HEK293 (cell line): ENCODE measurements at regions of chr5 and their contacts with region 1.

Region 1: GRCh38 chr5:62297026-62297425 is 9.0 kb upstream of the KIF2A start:
- H3K4me3 ChIP-seq: no peak overlapping the region
- H3K27ac ChIP-seq: no peak overlapping the region
- H3K4me1 ChIP-seq: no peaks in the 10 kb centered on the region
- CTCF ChIP-seq: no peak

Region 2: DNA sequence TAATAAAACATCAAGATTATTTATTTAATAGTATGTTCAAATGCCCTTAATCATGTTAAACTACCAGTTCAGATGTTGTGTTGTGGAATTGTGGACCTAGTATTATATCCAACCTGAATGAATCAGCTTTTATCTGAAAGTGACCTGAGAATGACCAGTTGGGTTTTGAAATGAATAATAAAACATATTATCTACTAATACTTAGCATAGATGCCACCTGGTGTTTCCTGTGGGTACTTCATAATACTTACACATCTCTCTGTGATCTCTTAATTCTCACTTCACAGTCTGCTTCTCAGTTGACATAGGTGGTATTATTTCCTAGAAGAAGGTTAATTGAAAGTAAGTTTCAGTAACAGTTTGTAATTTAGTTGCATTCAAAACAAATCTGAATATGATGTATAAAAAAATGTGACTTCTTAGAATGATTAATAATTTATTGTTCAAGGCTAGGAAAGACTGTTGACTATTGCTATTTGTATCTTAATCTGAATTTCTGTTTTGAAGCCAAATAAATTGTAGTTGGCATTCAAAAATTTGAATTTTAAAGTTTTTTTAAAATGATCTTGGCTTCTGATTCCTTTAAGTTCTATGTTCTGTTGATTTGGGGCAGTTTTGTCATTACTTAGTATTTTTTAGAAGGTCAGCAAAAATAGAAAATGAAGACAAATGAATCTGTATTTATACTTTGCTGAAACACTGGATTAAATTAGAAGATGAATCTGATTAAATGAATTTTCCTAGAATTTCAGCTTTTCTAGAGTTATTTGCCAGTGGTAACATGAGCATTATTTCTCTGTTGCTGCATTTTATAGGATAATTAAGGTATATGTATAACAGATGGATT is 57.2 kb after region 1 on chr5:
- CTCF ChIA-PET with region 1: interaction called, 10 read pairs
- POLR2A ChIA-PET with region 1: no interaction called
- H3K4me3 ChIP-seq: no peak overlapping the region
- H3K27ac ChIP-seq: no peak overlapping the region
- H3K4me1 ChIP-seq: no peaks in the 10 kb centered on the region
- CTCF ChIP-seq: no peak